Panc1 (cell line): ENCODE measurements at regions of chr6 and their contacts with region 1.

Region 1: GRCh38 chr6:8983188-8983688 is 547.9 kb upstream of the SLC35B3 start:
- DNase-seq: peak; percentile 53
- ATAC-seq: peak; percentile 96
- H3K4me3 ChIP-seq: no peak overlapping the region
- H3K27ac ChIP-seq: peak overlapping the region; percentile 48; the same call in 1 of the 2 replicates
- H3K4me1 ChIP-seq: peaks cover 11% of the 10 kb centered on the region; the same call in 1 of the 2 replicates
- H3K27me3 ChIP-seq: no peaks in the 10 kb centered on the region
- CTCF ChIP-seq: peak; percentile 94

Region 2: GRCh38 chr6:8845690-8846089 is 137.5 kb before region 1 on chr6:
- CTCF ChIA-PET with region 1: no interaction called
- POLR2A ChIA-PET with region 1: no interaction called
- in situ Hi-C with region 1: no loop called
- intact Hi-C with region 1: no loop called
- DNase-seq: no peak
- ATAC-seq: no peak
- H3K4me3 ChIP-seq: no peak overlapping the region
- H3K27ac ChIP-seq: no peak overlapping the region
- H3K4me1 ChIP-seq: no peaks in the 10 kb centered on the region
- H3K27me3 ChIP-seq: no peaks in the 10 kb centered on the region
- CTCF ChIP-seq: no peak

Region 3: GRCh38 chr6:8914700-8915099 is 68.5 kb before region 1 on chr6:
- CTCF ChIA-PET with region 1: no interaction called
- POLR2A ChIA-PET with region 1: no interaction called
- in situ Hi-C with region 1: no loop called
- intact Hi-C with region 1: no loop called
- DNase-seq: no peak
- ATAC-seq: no peak
- H3K4me3 ChIP-seq: no peak overlapping the region
- H3K27ac ChIP-seq: no peak overlapping the region
- H3K4me1 ChIP-seq: no peaks in the 10 kb centered on the region
- H3K27me3 ChIP-seq: no peaks in the 10 kb centered on the region
- CTCF ChIP-seq: no peak

Region 4: GRCh38 chr6:9085054-9085708 is 101.9 kb after region 1 on chr6:
- CTCF ChIA-PET with region 1: no interaction called
- POLR2A ChIA-PET with region 1: no interaction called
- in situ Hi-C with region 1: no loop called
- intact Hi-C with region 1: no loop called
- DNase-seq: no peak
- ATAC-seq: no peak
- H3K4me3 ChIP-seq: no peak overlapping the region
- H3K27ac ChIP-seq: no peak overlapping the region
- H3K4me1 ChIP-seq: no peaks in the 10 kb centered on the region
- H3K27me3 ChIP-seq: no peaks in the 10 kb centered on the region
- CTCF ChIP-seq: no peak

Region 5: GRCh38 chr6:10429638-10430427 is 1446.6 kb after region 1 on chr6:
- CTCF ChIA-PET with region 1: interaction called, 4 read pairs
- POLR2A ChIA-PET with region 1: no interaction called
- in situ Hi-C with region 1: no loop called
- intact Hi-C with region 1: loop called (anchors 2 kb)
- DNase-seq: no peak
- ATAC-seq: peak; percentile 83
- H3K4me3 ChIP-seq: no peak overlapping the region
- H3K27ac ChIP-seq: peak overlapping the region; percentile 72; the same call in 1 of the 2 replicates
- H3K4me1 ChIP-seq: peaks cover 40% of the 10 kb centered on the region
- H3K27me3 ChIP-seq: no peaks in the 10 kb centered on the region
- CTCF ChIP-seq: peak; percentile 77